Ascending aorta (tissue), 2 donors: ENCODE measurements at regions of chrX and their contacts with region 1.

Region 1: DNA sequence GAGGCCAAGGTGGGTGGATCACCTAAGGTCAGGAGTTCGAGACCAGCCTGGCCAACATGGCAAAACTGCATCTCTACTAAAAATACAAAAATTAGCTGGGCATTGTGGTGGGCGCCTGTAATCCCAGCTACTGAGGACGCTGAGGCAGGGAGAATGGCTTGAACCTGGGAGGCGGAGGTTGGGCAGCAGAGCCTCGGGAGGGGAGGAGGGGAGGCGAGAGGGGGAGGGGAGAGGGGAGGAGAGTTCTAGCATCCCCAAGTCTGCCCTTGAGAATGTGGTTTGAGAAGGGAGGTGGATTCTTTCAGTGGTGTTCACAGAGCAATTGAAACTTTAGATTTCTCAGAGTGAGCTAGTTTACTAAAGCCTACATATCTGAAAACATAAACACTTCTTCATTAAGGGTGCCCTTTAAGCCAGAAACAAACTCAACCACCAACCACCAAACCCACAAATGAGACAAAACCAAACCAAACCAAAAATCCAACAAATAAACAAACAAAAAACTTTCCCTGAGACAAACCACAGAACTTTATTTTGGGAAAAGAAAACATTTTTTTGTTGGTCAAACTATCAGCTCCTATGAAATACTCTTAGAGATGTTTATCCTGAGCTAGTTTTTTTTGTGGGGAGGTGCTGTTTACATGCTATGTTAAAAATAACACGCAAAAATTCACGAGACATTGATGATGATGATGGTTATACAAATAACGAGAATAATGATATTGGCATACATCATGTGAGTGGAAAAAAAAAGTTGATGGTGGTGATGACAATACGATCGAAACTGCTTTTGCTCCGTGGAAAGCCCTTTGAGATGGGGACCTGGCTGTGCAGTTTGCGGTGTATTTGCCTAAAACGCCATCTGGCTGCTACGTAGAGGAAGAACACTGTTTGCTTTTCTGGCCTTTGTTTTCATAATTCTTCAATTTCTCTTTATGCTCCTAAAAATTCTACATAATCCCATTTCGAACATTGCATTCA is 98.2 kb upstream of the PRKX start:
- DNase-seq: no peak
- H3K4me3 ChIP-seq: no peak overlapping the region
- H3K27ac ChIP-seq: no peak overlapping the region
- H3K4me1 ChIP-seq: peaks cover 0 to 4% of the 10 kb centered on the region in 2 donors
- H3K27me3 ChIP-seq: no peaks in the 10 kb centered on the region
- CTCF ChIP-seq: peak; percentile 32 to 64 (median 48)

Region 2: GRCh38 chrX:2334237-2334636 is 1477.4 kb before region 1 on chrX:
- intact Hi-C with region 1: loop called (anchors 5 kb)
- DNase-seq: no peak
- H3K4me3 ChIP-seq: no peak overlapping the region
- H3K27ac ChIP-seq: no peak overlapping the region
- H3K4me1 ChIP-seq: no peaks in the 10 kb centered on the region
- H3K27me3 ChIP-seq: no peaks in the 10 kb centered on the region
- CTCF ChIP-seq: no peak

Region 3: GRCh38 chrX:2928191-2928763 is 883.3 kb before region 1 on chrX:
- intact Hi-C with region 1: loop called (anchors 1 kb)
- DNase-seq: peak in 1 of 2 donors; percentile 24
- H3K4me3 ChIP-seq: peak overlapping the region; percentile 83 to 92
- H3K27ac ChIP-seq: peak overlapping the region; percentile 97 to 99
- H3K4me1 ChIP-seq: no peaks in the 10 kb centered on the region
- H3K27me3 ChIP-seq: no peaks in the 10 kb centered on the region
- CTCF ChIP-seq: no peak

Region 4: DNA sequence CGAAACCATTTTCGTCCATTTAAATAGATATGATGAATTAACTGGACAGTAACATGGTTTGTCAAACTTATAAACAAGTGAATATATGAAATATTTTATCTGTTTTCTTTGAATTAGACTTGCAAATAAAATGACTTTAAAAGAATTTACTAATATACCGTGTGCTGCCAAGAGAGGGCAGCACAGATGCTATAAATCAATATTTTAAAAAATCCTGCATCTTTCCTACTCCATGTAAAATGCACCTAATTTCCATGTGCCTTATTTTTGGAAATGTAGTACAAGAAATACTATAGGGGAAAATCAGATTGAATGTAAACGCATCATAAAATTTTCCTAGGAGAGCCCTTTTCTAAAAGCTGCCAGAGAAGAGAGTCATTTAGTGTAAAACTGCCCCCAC is 160.3 kb before region 1 on chrX:
- intact Hi-C with region 1: loop called (anchors 1 kb)
- DNase-seq: no peak
- H3K4me3 ChIP-seq: no peak overlapping the region
- H3K27ac ChIP-seq: no peak overlapping the region
- H3K4me1 ChIP-seq: no peaks in the 10 kb centered on the region
- H3K27me3 ChIP-seq: no peaks in the 10 kb centered on the region
- CTCF ChIP-seq: peak; percentile 12 to 59 (median 54)

Region 5: GRCh38 chrX:3669841-3670475 is 141.7 kb before region 1 on chrX:
- intact Hi-C with region 1: no loop called
- DNase-seq: no peak
- H3K4me3 ChIP-seq: no peak overlapping the region
- H3K27ac ChIP-seq: no peak overlapping the region
- H3K4me1 ChIP-seq: no peaks in the 10 kb centered on the region
- H3K27me3 ChIP-seq: no peaks in the 10 kb centered on the region
- CTCF ChIP-seq: no peak

Region 6: DNA sequence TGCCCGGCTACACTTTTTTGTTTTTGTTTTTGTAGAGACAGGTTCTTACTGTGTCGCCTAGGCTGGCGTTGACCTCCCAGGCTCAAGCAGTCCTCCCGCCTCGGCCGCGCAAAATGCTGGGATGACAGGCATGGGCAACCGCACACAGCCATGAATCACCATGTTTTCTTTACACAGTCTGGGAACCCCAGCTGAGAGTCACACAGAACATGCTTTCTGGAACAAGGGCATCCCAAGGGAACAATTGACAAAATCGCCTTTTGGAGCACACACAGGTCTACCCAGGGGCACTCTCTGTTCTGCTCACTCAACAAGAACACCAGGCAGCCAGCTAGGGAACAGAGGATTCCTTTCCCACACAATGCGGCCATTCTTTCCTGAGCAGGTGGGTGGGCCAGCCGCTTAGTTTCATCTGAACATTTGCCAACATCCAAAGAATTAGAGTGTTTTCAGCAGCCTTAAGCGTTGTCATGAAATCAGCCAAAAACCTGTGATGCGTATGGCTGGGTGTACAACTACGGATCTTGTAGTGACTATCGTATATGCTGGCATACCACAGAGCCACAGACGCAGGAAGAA is 113.8 kb before region 1 on chrX:
- intact Hi-C with region 1: loop called (anchors 5 kb)
- DNase-seq: peak in 1 of 2 donors; percentile 77
- H3K4me3 ChIP-seq: no peak overlapping the region
- H3K27ac ChIP-seq: no peak overlapping the region
- H3K4me1 ChIP-seq: peaks cover 0 to 5% of the 10 kb centered on the region in 2 donors
- H3K27me3 ChIP-seq: no peaks in the 10 kb centered on the region
- CTCF ChIP-seq: no peak

Region 7: GRCh38 chrX:3713225-3713936 is 98.2 kb before region 1 on chrX and contains the start of gene PRKX:
- intact Hi-C with region 1: loop called (anchors 5 kb)
- DNase-seq: peak in 1 of 2 donors; percentile 75
- H3K4me3 ChIP-seq: peak within 1 kb of the TSS; percentile 72 to 75
- H3K27ac ChIP-seq: peak within 1 kb of the TSS; percentile 53 to 54
- H3K4me1 ChIP-seq: peaks cover 0 to 2% of the 10 kb centered on the region in 2 donors
- H3K27me3 ChIP-seq: no peaks in the 10 kb centered on the region
- CTCF ChIP-seq: no peak
- total RNA-seq, gene PRKX: 9.2 TPM